Activated naive CD8-positive, alpha-beta T cell treated with anti-CD3 and anti-CD28 coated beads, Interleukin-2, amount 10 ng/mL, durations not matched to agents 7 days and 5 days (primary cell): ENCODE measurements at regions of chr17 and their contacts with region 1.

Region 1: GRCh38 chr17:75034236-75034908 is 12.4 kb downstream of the ATP5PD start:
- DNase-seq: peak; percentile 87
- ATAC-seq: peak; percentile 53
- H3K4me3 Mint-ChIP-seq: peak overlapping the region; percentile 88
- H3K27ac Mint-ChIP-seq: peak overlapping the region; percentile 95
- H3K4me1 Mint-ChIP-seq: peaks cover 40% of the 10 kb centered on the region
- H3K27me3 Mint-ChIP-seq: no peaks in the 10 kb centered on the region

Region 2: GRCh38 chr17:74864866-74865395 is 169.4 kb before region 1 on chr17:
- POLR2A ChIA-PET with region 1: no interaction called
- DNase-seq: peak; percentile 80
- ATAC-seq: peak; percentile 53
- H3K4me3 Mint-ChIP-seq: no peak overlapping the region
- H3K27ac Mint-ChIP-seq: peak overlapping the region; percentile 63
- H3K4me1 Mint-ChIP-seq: peaks cover 20% of the 10 kb centered on the region
- H3K27me3 Mint-ChIP-seq: peaks cover 18% of the 10 kb centered on the region

Region 3: GRCh38 chr17:75046582-75047289 is 12.4 kb after region 1 on chr17 and contains the starts of genes ATP5PD and KCTD2:
- POLR2A ChIA-PET with region 1: interaction called, 14 read pairs
- DNase-seq: peak; percentile 93
- ATAC-seq: peak; percentile 92
- H3K4me3 Mint-ChIP-seq: peak within 1 kb of the TSS; percentile 98
- H3K27ac Mint-ChIP-seq: peak within 1 kb of the TSS; percentile 93
- H3K4me1 Mint-ChIP-seq: peaks cover 23% of the 10 kb centered on the region
- H3K27me3 Mint-ChIP-seq: no peaks in the 10 kb centered on the region
- total RNA-seq, gene ATP5PD: 196 to 199 TPM
- total RNA-seq, gene KCTD2: 20.4 to 22.4 TPM